K562 (cell line): ENCODE measurements at regions of chr1 and their contacts with region 1.

Region 1: DNA sequence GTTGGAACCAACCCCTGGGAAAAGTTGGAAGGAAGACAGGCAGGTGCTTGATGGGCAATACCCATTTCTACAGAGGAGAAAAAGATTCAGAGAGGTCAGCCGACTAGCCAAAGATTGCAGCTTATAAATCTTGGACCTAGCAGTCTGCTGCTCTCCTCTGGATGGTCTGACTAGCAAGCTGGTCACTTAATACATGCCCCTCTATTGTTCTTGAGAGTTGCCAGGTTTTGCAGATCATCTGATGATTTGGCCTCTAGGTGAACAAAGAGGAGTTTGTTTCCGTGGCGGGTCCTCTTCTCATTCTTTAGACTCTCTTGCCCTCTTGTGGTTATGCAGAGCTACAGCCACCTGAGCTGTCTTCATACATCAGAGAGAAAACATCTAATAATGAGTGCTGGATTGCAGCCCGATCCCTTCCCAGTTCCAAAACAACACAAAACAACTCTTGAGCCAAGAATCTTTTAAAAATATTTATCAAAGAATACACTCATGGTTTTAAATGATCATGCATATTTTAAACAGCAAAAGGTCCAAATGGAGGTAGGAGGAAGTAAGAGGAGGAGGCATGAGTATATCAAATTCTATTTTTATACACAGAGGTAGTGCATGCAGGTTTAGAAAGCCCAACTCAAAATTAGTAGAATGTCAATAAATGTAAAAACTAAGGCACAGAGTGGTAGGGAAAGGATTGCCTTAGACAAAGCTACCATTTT is 115.7 kb downstream of the SLC30A10 start:
- DNase-seq: peak; percentile 72 to 81 (median 76)
- ATAC-seq: peak; percentile 97
- H3K4me3 ChIP-seq: no peak overlapping the region
- H3K27ac ChIP-seq: no peak overlapping the region
- H3K4me1 ChIP-seq: no peaks in the 10 kb centered on the region
- H3K27me3 ChIP-seq: peaks cover 15 to 33% of the 10 kb centered on the region in 2 experiments; a peak in 3 of 5 replicates
- CTCF ChIP-seq: peak; percentile 89 to 97 (median 96)
- EP300 ChIP-seq: no peak
- POLR2A ChIP-seq: no peak
- RAD21 ChIP-seq: peak; percentile 94 to 97

Region 2: GRCh38 chr1:218345673-218346390 is 1466.8 kb before region 1 on chr1:
- CTCF ChIA-PET with region 1: no interaction called
- POLR2A ChIA-PET with region 1: no interaction called
- in situ Hi-C with region 1: loop called (anchors 25 kb)
- intact Hi-C with region 1: no loop called
- DNase-seq: peak; percentile 49 to 63 (median 54)
- ATAC-seq: peak; percentile 91
- H3K4me3 ChIP-seq: peak overlapping the region; percentile 41
- H3K27ac ChIP-seq: no peak overlapping the region
- H3K4me1 ChIP-seq: peaks cover 5 to 15% of the 10 kb centered on the region in 2 experiments; a peak in 3 of 5 replicates
- H3K27me3 ChIP-seq: no peaks in the 10 kb centered on the region
- CTCF ChIP-seq: no peak
- EP300 ChIP-seq: no peak
- POLR2A ChIP-seq: no peak
- RAD21 ChIP-seq: no peak

Region 3: DNA sequence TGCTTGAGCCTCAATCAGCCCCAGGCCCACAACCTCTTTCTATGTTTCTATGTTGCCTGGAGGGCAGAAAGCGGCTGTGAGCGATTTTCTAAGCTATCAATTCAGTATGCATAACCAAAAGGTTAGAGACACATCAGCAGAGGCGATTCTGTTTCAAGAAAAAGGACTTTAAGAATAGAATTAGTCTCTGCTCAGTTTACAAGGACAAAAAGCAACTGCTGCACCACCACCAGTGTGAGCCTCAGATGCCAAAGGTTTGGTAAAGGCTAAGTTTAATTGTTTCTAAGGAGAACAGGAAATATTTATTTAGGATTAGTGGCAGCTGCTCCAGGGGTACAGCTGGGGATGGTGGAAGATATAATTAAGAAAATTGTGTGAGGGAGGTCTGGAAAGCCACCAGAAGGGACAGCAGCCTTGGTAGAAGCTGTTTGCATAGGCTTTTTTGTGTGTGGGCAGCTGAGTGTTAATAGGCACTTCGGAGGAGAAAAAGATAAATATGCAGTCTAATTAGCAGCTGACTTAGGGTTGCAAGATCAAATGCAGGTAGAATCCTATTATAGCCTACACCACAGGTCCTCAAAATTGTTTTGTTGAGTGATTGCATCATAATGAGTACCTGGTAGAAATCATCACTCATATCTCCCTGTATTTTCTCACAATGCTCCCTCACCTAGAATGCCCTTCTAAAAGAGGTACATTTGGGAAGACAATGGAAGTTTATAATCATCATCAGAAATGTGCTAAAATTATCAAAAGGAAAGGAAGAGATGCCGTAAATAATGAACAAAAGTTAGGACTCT is 235.5 kb before region 1 on chr1:
- CTCF ChIA-PET with region 1: no interaction called
- POLR2A ChIA-PET with region 1: no interaction called
- in situ Hi-C with region 1: no loop called
- intact Hi-C with region 1: loop called (anchors 10 kb)
- DNase-seq: no peak
- ATAC-seq: no peak
- H3K4me3 ChIP-seq: no peak overlapping the region
- H3K27ac ChIP-seq: no peak overlapping the region
- H3K4me1 ChIP-seq: no peaks in the 10 kb centered on the region
- H3K27me3 ChIP-seq: no peaks in the 10 kb centered on the region; a peak in 1 of 5 replicates
- CTCF ChIP-seq: no peak
- EP300 ChIP-seq: no peak
- POLR2A ChIP-seq: no peak
- RAD21 ChIP-seq: no peak

Region 4: DNA sequence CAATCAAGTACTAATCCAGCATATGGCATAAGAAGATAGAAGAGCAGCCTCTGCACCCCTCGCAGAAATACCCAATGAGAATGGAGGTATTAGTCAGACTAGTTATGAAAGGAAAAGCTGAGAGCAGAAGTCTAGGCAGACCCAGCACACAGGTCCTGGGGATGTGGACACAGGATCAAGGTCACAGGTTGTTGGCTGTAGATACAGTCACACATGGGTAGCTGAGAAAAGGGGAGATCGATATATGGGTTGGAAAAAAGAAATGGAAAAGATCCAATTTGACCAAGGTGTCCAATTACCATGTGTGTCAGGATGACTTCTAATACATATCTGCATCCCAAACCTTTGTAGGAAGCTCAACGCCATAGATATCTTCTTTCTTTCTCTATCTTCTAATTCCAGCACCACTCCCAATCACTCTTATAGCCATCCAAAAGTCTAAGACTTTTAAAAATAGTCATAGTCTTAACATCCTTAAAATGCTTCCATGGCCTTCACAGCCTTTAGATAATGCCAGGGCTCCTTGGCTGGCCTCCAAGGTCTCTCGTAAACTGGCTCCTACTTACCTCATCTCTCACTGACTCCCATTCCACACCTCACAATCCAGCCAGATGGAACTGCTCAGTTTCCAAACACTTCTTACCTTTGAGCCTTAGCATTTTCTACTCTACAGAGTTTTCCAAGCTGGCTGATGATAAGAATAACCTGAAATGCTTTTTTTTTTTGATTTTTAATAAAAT is 191.4 kb before region 1 on chr1:
- CTCF ChIA-PET with region 1: no interaction called
- POLR2A ChIA-PET with region 1: no interaction called
- in situ Hi-C with region 1: no loop called
- intact Hi-C with region 1: no loop called
- DNase-seq: peak in 1 of 4 experiments; percentile 4
- ATAC-seq: no peak
- H3K4me3 ChIP-seq: no peak overlapping the region
- H3K27ac ChIP-seq: no peak overlapping the region
- H3K4me1 ChIP-seq: no peaks in the 10 kb centered on the region
- H3K27me3 ChIP-seq: no peaks in the 10 kb centered on the region
- CTCF ChIP-seq: no peak
- EP300 ChIP-seq: no peak
- POLR2A ChIP-seq: no peak
- RAD21 ChIP-seq: no peak

Region 5: DNA sequence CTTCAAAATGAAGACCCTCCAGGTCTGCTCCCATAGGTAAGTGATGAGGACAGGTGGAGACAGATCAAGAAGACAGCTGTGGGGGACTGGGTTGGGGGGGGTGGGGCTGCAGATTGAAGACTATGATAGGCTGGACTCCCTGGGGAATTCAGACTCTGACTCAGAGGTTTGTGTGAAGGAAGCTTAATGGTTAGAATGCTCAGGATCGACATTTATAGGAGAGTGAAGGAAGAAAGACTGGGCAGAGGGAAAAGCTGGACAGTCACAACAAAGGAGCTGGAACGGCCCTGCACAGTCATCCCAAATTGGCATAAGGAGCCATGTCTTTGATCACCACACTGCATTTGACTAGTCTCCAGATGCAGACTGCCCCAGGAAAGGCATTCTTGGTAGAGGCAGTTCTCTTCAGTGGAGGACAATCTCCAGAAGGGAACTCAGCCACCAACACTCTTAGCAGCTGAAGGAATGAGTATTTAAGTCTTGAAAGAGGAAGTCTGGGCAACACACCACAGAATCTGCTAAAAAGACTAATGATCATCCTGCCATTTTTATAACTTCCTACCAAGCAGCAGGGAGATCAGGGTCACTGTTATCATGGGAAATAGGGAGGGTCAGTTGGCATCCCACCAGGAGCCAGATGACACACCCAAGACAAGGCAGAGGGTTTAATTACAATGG is 79.7 kb before region 1 on chr1:
- CTCF ChIA-PET with region 1: no interaction called
- POLR2A ChIA-PET with region 1: no interaction called
- in situ Hi-C with region 1: no loop called
- intact Hi-C with region 1: loop called (anchors 5 kb)
- DNase-seq: no peak
- ATAC-seq: no peak
- H3K4me3 ChIP-seq: no peak overlapping the region
- H3K27ac ChIP-seq: no peak overlapping the region
- H3K4me1 ChIP-seq: peaks cover 0 to 7% of the 10 kb centered on the region in 2 experiments; a peak in 2 of 5 replicates
- H3K27me3 ChIP-seq: no peaks in the 10 kb centered on the region
- CTCF ChIP-seq: no peak
- EP300 ChIP-seq: no peak
- POLR2A ChIP-seq: no peak
- RAD21 ChIP-seq: no peak

Region 6: DNA sequence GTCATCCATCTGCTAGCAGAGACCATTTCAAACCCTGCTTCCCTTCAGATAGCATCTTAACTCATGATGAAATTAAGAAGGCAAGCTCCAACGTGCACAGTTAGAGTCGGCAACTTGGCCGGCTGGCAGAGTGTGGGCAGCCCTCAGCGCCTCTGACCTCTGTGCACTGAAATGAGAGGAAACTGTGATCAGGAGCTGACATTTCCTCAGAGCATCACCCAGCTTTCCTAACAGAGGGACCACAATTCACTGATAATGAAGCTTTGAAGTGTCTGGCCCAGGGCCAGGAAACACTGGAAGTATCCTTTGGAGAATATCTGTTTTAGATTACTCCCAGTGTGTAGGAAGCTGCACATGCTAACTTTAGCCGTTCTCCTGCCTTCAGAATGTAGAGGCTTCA is 54.8 kb before region 1 on chr1:
- CTCF ChIA-PET with region 1: no interaction called
- POLR2A ChIA-PET with region 1: no interaction called
- in situ Hi-C with region 1: no loop called
- intact Hi-C with region 1: no loop called
- DNase-seq: peak in 1 of 4 experiments; percentile 15
- ATAC-seq: no peak
- H3K4me3 ChIP-seq: no peak overlapping the region
- H3K27ac ChIP-seq: no peak overlapping the region
- H3K4me1 ChIP-seq: no peaks in the 10 kb centered on the region; a peak in 1 of 5 replicates
- H3K27me3 ChIP-seq: peaks cover 4 to 9% of the 10 kb centered on the region in 2 experiments
- CTCF ChIP-seq: no peak
- EP300 ChIP-seq: no peak
- POLR2A ChIP-seq: no peak
- RAD21 ChIP-seq: no peak

Region 7: GRCh38 chr1:220076861-220077762 is 264.5 kb after region 1 on chr1:
- CTCF ChIA-PET with region 1: no interaction called
- POLR2A ChIA-PET with region 1: no interaction called
- in situ Hi-C with region 1: no loop called
- intact Hi-C with region 1: no loop called
- DNase-seq: peak in 1 of 4 experiments; percentile 26
- ATAC-seq: no peak
- H3K4me3 ChIP-seq: no peak overlapping the region
- H3K27ac ChIP-seq: no peak overlapping the region
- H3K4me1 ChIP-seq: no peaks in the 10 kb centered on the region
- H3K27me3 ChIP-seq: no peaks in the 10 kb centered on the region
- CTCF ChIP-seq: no peak
- EP300 ChIP-seq: no peak
- POLR2A ChIP-seq: no peak
- RAD21 ChIP-seq: no peak